ENCODE measurements at regions of chr10 and their contacts with region 1.

Region 1: GRCh38 chr10:70221030-70221429 is 12.2 kb downstream of the PPA1 start:
- DNase-seq: no peak
- H3K4me3 ChIP-seq: no peak overlapping the region
- H3K27ac ChIP-seq: no peak overlapping the region
- H3K4me1 ChIP-seq: peaks cover 6% of the 10 kb centered on the region
- H3K27me3 ChIP-seq: no peaks in the 10 kb centered on the region
- CTCF ChIP-seq: no peak
- POLR2A ChIP-seq: no peak

Region 2: DNA sequence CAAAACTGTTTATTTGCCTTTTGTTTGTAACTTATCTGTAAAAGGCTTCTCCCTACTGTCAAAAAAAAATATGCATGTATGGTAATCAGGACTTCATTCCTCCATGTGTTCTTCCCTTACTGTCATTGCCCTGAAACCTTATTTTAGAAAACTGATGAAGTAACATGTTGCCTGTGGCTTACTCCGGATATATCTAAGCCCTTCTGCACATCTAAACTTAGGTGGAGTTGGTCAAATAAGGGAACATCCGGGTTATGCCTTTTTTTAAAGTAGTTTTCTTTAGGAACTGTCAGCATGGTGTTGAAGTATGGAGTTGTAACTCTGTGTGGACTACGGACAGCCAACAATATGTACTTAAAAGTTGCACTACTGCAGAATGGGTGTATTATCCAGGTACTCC is 56.9 kb before region 1 on chr10:
- CTCF ChIA-PET with region 1: no interaction called
- POLR2A ChIA-PET with region 1: no interaction called
- dilution Hi-C with region 1: no loop called
- intact Hi-C with region 1: no loop called
- DNase-seq: no peak
- H3K4me3 ChIP-seq: no peak overlapping the region
- H3K27ac ChIP-seq: no peak overlapping the region
- H3K4me1 ChIP-seq: peaks cover 6% of the 10 kb centered on the region
- H3K27me3 ChIP-seq: no peaks in the 10 kb centered on the region
- CTCF ChIP-seq: no peak
- POLR2A ChIP-seq: no peak

Region 3: DNA sequence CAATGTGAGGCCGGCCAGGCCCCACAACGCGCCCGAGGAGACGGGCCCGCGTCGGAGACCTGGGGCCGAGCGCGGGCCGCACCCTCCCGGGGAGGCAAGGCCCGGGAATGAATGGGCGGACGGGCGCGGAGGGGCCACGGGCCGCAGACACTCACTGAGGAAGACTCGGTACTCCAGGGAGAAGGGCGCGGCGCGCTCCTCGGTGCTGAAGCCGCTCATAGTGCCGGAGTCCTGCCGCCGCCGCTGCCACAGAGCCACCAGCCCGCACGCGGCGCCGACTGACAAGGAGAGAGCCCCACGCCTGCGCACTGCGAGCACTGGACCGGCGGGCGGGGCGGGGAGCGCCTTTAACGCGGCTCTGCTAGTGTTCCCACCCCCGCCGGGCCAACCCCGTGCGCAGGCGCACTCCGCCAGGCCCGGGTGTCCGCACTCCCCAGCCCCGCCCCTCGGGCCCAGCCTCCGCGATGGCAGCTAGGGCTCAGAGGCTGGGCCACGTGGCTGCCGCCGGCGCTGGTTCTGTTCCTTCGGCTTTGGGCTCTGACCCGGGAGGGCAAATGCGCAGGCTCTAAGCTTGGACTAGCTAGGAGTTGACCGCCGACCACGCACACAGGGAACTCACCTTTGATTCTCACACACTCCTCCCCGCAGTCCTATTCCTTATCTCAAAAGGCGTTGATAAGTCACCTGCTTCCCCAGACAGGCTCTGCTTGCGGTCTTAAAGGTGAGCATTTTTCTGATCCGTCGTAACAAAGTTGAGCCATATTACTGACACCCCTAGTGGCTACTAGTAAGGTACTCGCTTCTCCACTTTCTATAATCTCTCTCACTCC is 12.3 kb after region 1 on chr10 and contains the start of gene PPA1:
- CTCF ChIA-PET with region 1: interaction called, 50 read pairs
- POLR2A ChIA-PET with region 1: interaction called, 3 read pairs
- dilution Hi-C with region 1: no loop called
- intact Hi-C with region 1: no loop called
- DNase-seq: peak; percentile 96
- H3K4me3 ChIP-seq: peak within 1 kb of the TSS; percentile 72 to 91 (median 80)
- H3K27ac ChIP-seq: peak within 1 kb of the TSS; percentile 58
- H3K4me1 ChIP-seq: peaks cover 11% of the 10 kb centered on the region
- H3K27me3 ChIP-seq: no peaks in the 10 kb centered on the region
- CTCF ChIP-seq: peak in 1 of 2 donors; percentile 9
- POLR2A ChIP-seq: peak; percentile 95
- total RNA-seq, gene PPA1: 115 and 140 TPM in 2 replicates

Region 4: GRCh38 chr10:70348228-70348850 is 127.3 kb after region 1 on chr10:
- CTCF ChIA-PET with region 1: interaction called, 55 read pairs
- POLR2A ChIA-PET with region 1: no interaction called
- dilution Hi-C with region 1: no loop called
- intact Hi-C with region 1: no loop called
- DNase-seq: peak; percentile 30
- H3K4me3 ChIP-seq: no peak overlapping the region
- H3K27ac ChIP-seq: no peak overlapping the region
- H3K4me1 ChIP-seq: no peaks in the 10 kb centered on the region
- H3K27me3 ChIP-seq: peaks cover 0 to 4% of the 10 kb centered on the region in 2 experiments
- CTCF ChIP-seq: peak; percentile 42 to 63
- POLR2A ChIP-seq: no peak

Region 5: GRCh38 chr10:70374775-70375614 is 154.0 kb after region 1 on chr10:
- CTCF ChIA-PET with region 1: interaction called, 38 read pairs
- POLR2A ChIA-PET with region 1: no interaction called
- dilution Hi-C with region 1: no loop called
- intact Hi-C with region 1: no loop called
- DNase-seq: peak; percentile 20
- H3K4me3 ChIP-seq: no peak overlapping the region
- H3K27ac ChIP-seq: no peak overlapping the region
- H3K4me1 ChIP-seq: peaks cover 39% of the 10 kb centered on the region
- H3K27me3 ChIP-seq: no peaks in the 10 kb centered on the region
- CTCF ChIP-seq: no peak
- POLR2A ChIP-seq: no peak

Region 6: DNA sequence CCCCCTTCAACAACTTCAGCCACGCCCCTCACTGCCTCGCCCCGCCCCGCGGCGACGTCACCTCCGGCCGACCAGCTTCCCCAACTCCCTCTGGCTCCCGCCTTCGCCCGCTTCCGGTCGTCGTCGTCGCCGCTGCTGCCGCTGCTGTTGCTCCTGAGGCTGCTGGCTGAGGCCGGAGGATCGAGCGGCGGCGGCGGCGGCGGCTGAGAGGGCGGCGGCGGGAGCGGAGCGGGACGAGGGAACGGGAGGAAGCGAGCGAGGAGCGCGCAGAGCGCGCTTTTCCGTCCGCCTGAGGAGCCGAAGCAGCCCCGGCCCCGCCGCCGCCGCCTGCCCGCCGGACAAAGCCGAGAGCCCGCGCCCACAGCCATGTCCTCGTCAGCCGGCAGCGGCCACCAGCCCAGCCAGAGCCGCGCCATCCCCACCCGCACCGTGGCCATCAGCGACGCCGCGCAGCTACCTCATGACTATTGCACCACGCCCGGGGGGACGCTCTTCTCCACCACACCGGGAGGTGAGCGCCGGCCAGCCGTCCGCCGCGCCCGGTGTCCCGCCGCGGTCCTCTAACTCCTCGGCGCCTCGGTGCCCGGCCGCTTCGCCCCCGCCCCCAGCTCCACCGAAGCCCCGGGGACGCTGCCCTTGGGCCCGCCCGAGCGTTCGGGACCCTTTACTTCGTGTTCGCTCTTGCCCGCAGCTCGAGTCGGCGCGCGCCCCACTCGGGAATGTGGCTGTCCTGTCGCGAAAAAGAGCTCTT is 183.2 kb after region 1 on chr10 and contains the start of gene EIF4EBP2:
- CTCF ChIA-PET with region 1: interaction called, 30 read pairs
- POLR2A ChIA-PET with region 1: no interaction called
- dilution Hi-C with region 1: no loop called
- intact Hi-C with region 1: no loop called
- DNase-seq: peak; percentile 99
- H3K4me3 ChIP-seq: peak within 1 kb of the TSS; percentile 64 to 83 (median 79)
- H3K27ac ChIP-seq: peak within 1 kb of the TSS; percentile 42
- H3K4me1 ChIP-seq: peaks cover 28% of the 10 kb centered on the region
- H3K27me3 ChIP-seq: no peaks in the 10 kb centered on the region
- CTCF ChIP-seq: no peak
- POLR2A ChIP-seq: peak; percentile 90
- total RNA-seq, gene EIF4EBP2: 46.6 and 47.0 TPM in 2 replicates

Region 7: DNA sequence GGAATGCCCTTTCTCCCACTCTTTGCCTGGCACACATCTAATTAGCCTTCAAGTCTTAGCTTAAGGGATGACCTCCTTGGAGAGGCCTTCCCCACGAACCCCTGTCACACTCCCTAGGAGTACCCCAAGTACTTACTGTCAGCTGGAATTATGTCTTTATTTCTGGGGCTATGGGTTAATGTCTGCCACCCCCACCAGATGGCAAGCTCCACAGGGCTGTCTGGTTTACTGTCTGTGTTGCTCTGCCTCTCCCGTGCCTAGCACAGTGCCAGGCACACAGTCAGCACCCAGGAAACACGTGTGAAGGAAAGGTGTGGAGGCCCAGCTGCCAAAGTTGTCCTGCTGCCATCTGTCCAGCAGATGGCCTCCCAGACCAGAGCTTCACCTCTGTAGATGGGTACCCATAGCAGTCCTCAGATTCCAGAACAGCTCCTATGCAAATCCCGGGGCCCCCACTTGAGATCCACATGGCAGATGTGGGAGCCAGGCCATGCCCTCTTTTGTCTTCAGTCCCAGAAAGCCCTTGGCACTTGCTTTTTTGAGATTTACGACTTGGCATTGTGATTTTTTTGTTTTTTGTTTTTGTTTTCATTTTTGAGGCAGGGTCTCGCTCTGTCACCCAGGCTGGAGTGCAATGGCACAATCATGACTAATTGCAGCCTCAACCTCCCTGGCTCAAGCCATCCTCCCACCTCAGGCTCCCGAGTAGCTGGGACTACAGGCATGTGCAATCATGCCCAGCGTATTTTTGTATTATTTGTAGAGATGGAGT is 240.4 kb after region 1 on chr10:
- CTCF ChIA-PET with region 1: interaction called, 38 read pairs
- POLR2A ChIA-PET with region 1: no interaction called
- dilution Hi-C with region 1: no loop called
- intact Hi-C with region 1: no loop called
- DNase-seq: peak; percentile 49
- H3K4me3 ChIP-seq: no peak overlapping the region
- H3K27ac ChIP-seq: no peak overlapping the region
- H3K4me1 ChIP-seq: no peaks in the 10 kb centered on the region
- H3K27me3 ChIP-seq: peaks cover 0 to 2% of the 10 kb centered on the region in 2 experiments
- CTCF ChIP-seq: peak; percentile 87
- POLR2A ChIP-seq: no peak

Region 8: DNA sequence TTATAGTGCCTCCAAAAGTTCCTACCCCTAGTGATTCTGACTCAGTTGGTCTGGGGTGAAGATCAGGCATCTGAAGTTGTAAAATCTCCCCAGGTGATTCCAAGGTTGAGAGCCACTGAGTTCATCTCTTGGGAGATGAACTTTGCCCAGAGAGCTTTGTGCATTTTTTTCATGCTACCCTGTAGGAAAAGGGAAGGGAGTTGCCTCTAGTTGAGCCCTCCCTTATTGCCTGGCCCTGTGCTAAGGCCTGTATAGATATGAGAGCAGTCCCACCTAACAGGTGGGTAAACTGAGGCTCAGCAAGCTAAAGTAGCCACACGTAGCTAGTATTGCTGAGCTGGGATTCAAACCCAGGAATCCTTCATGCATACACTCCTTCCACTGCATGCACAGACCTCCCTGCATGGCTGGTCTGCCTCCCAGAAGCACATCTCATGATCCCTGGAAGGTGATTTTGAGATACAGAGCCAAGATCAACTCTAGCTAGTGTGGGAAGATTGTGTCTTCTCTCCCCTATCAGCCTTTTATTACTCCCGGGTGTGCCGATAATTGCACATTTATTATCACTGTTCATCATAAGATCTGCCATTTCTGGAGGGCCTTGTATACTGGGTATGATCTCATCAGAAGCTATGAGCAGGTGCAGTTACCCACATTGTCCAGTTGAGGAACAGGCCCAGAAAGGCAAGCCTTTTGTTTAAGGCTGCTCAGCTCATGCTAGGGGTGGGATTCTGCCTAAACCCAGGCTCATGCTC is 517.2 kb after region 1 on chr10:
- CTCF ChIA-PET with region 1: no interaction called
- POLR2A ChIA-PET with region 1: no interaction called
- dilution Hi-C with region 1: no loop called
- intact Hi-C with region 1: no loop called
- DNase-seq: no peak
- H3K4me3 ChIP-seq: no peak overlapping the region
- H3K27ac ChIP-seq: no peak overlapping the region
- H3K4me1 ChIP-seq: peaks cover 6% of the 10 kb centered on the region
- H3K27me3 ChIP-seq: no peaks in the 10 kb centered on the region
- CTCF ChIP-seq: no peak
- POLR2A ChIP-seq: no peak

Region 9: GRCh38 chr10:70803775-70804420 is 582.9 kb after region 1 on chr10:
- CTCF ChIA-PET with region 1: no interaction called
- POLR2A ChIA-PET with region 1: no interaction called
- dilution Hi-C with region 1: no loop called
- intact Hi-C with region 1: no loop called
- DNase-seq: no peak
- H3K4me3 ChIP-seq: no peak overlapping the region
- H3K27ac ChIP-seq: no peak overlapping the region
- H3K4me1 ChIP-seq: no peaks in the 10 kb centered on the region
- H3K27me3 ChIP-seq: peaks cover 13 to 29% of the 10 kb centered on the region in 2 experiments
- CTCF ChIP-seq: no peak
- POLR2A ChIP-seq: no peak